Panc1 (cell line): ENCODE measurements at regions of chr13 and their contacts with region 1.

Region 1: DNA sequence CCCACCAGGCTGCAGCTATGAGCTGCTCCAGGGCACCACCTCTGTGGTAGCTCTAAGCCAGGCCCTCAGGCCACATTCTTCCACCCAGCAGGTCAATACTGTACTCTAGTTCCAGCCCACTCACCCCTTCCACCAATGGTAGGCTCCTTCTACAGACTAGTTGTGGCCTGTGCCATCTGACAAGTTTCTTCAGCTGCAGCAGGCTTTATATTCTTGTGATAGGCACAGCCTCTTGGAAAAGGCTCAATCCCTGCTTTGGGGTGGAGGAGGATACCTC is 8.5 kb downstream of the MICU2 start:
- DNase-seq: no peak
- ATAC-seq: no peak; the same call in 1 of the 2 replicates
- H3K4me3 ChIP-seq: no peak overlapping the region
- H3K27ac ChIP-seq: no peak overlapping the region
- H3K4me1 ChIP-seq: no peaks in the 10 kb centered on the region
- H3K27me3 ChIP-seq: no peaks in the 10 kb centered on the region
- CTCF ChIP-seq: no peak

Region 2: DNA sequence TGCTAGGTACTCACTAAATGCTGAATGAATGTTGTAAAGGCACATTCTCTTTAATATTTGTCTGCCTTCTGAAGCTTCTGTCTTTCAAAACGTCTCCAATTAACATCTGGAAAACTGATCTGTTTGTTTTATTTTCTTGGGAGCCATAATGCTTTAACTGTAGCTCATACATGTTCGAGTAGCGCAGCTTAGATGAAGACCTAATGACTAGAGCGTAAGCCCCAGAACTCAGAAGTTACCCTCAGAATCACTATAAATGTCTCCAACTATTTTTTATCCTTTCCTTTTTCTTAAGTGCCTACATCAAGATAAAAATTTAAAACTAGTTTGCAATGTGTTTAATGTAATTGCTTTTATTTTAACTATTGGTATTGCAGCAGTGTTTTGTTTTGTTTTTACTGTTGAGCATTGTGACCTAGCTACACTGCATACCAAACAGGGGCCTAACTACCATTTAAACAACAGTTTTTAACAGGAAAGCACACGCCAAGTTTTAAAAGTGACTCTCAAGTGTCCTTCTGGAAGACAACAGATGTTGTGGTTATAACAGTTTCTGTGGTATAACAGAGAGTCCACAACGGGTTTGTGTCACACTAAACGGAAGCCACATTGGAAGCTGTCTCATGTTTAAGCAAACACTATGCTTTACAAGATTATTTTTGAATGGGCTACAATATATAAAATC is 377.0 kb before region 1 on chr13:
- CTCF ChIA-PET with region 1: no interaction called
- POLR2A ChIA-PET with region 1: no interaction called
- in situ Hi-C with region 1: no loop called
- intact Hi-C with region 1: no loop called
- DNase-seq: no peak
- ATAC-seq: no peak
- H3K4me3 ChIP-seq: no peak overlapping the region
- H3K27ac ChIP-seq: no peak overlapping the region
- H3K4me1 ChIP-seq: no peaks in the 10 kb centered on the region
- H3K27me3 ChIP-seq: no peaks in the 10 kb centered on the region; the same call in 1 of the 2 replicates
- CTCF ChIP-seq: no peak

Region 3: DNA sequence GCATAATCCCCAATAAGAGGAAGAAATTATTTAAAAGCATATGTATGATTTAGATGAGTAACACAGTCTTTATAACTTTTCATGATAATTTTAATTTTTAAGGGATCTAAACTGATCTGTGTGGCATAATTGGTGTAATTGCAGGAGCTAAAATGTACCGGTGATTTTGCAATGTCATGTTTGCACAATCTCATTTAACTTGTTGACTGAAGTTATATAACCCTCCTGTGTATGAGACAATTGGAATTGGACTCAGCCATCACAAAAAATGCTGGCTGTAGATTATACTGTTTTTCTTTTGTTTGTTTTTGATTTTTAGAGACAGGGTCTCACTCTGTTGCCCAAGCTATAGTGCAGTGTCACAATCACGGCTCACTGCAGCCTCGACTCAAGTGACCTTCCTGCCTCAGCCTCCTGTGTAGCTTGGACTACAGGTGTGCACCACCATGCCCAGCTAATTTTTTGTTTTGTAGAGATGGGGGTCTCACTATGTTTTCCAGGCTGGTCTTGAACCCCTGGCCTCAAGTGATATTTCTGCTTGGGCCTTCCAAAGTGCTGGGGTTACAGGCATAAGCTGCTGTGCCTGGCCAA is 101.5 kb after region 1 on chr13:
- CTCF ChIA-PET with region 1: no interaction called
- POLR2A ChIA-PET with region 1: no interaction called
- in situ Hi-C with region 1: no loop called
- intact Hi-C with region 1: no loop called
- DNase-seq: no peak
- ATAC-seq: no peak
- H3K4me3 ChIP-seq: no peak overlapping the region
- H3K27ac ChIP-seq: no peak overlapping the region
- H3K4me1 ChIP-seq: no peaks in the 10 kb centered on the region
- H3K27me3 ChIP-seq: peaks cover 4% of the 10 kb centered on the region; the same call in 1 of the 2 replicates
- CTCF ChIP-seq: no peak

Region 4: DNA sequence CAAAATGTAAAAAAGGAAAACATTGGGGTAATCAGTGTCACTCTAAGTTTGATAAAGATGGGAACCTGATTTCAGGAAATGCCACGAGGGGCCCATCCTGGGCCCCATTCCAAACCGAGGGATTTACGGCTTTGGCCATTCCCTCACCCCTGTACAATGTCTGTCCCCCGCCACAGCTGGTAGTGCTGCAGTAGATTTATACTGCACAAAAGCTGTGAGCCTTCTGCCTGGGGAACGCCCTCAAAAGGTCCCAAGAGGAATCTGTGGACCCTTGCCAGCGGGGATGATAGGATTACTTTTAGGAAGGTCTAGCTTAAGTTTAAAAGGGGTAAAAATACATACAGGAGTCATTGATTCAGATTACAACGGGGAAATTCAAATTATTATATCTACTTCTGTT is 1411.9 kb after region 1 on chr13:
- CTCF ChIA-PET with region 1: no interaction called
- POLR2A ChIA-PET with region 1: interaction called, 11 read pairs
- in situ Hi-C with region 1: no loop called
- intact Hi-C with region 1: no loop called
- DNase-seq: no peak
- ATAC-seq: no peak
- H3K4me3 ChIP-seq: no peak overlapping the region
- H3K27ac ChIP-seq: no peak overlapping the region
- H3K4me1 ChIP-seq: no peaks in the 10 kb centered on the region
- H3K27me3 ChIP-seq: no peaks in the 10 kb centered on the region
- CTCF ChIP-seq: no peak